Astrocyte of the cerebellum (primary cell): ENCODE measurements at regions of chr11 and their contacts with region 1.

Region 1: GRCh38 chr11:38476808-38477575 is 1879.0 kb upstream of the RAG2 start:
- DNase-seq: no peak
- H3K4me3 ChIP-seq: no peak overlapping the region
- CTCF ChIP-seq: no peak

Region 2: DNA sequence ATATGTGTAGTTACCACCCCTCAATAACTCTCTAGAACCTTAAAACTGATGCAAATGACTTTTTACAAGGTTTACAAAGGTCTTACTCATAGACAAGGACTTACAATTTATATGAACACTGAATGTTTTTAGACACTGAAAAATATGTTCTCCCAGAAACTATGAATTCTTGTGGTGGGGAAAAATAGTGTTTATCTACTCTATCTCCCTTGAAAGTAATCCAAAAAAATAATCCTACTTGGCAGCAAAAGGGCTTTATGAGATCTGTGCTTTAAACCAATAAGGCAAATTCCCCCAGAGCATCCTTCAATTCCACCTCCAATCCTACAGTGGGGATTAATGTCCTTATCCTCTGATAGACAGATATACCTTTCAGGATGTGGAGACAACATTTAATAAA is 105.2 kb after region 1 on chr11:
- in situ Hi-C with region 1: loop called (anchors 5 kb)
- DNase-seq: peak; percentile 9
- H3K4me3 ChIP-seq: no peak overlapping the region
- CTCF ChIP-seq: no peak